Body of pancreas (tissue), 4 donors: ENCODE measurements at regions of chr7 and their contacts with region 1.

Region 1: GRCh38 chr7:28921822-28922221 is 36.3 kb downstream of the TRIL start:
- DNase-seq: peak; percentile 44 to 70 (median 57)
- ATAC-seq: peak; percentile 89
- H3K4me3 ChIP-seq: no peak overlapping the region
- H3K27ac ChIP-seq: no peak overlapping the region
- H3K4me1 ChIP-seq: peaks cover 13% of the 10 kb centered on the region
- H3K27me3 ChIP-seq: peaks cover 0 to 6% of the 10 kb centered on the region in 2 donors
- CTCF ChIP-seq: peak; percentile 66 to 89 (median 86)
- POLR2A ChIP-seq: no peak

Region 2: GRCh38 chr7:29105752-29106668 is 184.2 kb after region 1 on chr7:
- intact Hi-C with region 1: loop called (anchors 5 kb)
- DNase-seq: peak; percentile 32 to 67 (median 51)
- ATAC-seq: peak; percentile 79
- H3K4me3 ChIP-seq: no peak overlapping the region
- H3K27ac ChIP-seq: no peak overlapping the region
- H3K4me1 ChIP-seq: no peaks in the 10 kb centered on the region
- H3K27me3 ChIP-seq: no peaks in the 10 kb centered on the region
- CTCF ChIP-seq: peak; percentile 60 to 89 (median 86)
- POLR2A ChIP-seq: no peak

Region 3: GRCh38 chr7:29408841-29409243 is 487.0 kb after region 1 on chr7:
- intact Hi-C with region 1: loop called (anchors 5 kb)
- DNase-seq: peak; percentile 64 to 77 (median 68)
- ATAC-seq: peak; percentile 59
- H3K4me3 ChIP-seq: no peak overlapping the region
- H3K27ac ChIP-seq: no peak overlapping the region
- H3K4me1 ChIP-seq: peaks cover 17% of the 10 kb centered on the region
- H3K27me3 ChIP-seq: no peaks in the 10 kb centered on the region
- CTCF ChIP-seq: peak; percentile 30 to 94 (median 90)
- POLR2A ChIP-seq: no peak